PC-9 (cell line): ENCODE measurements at regions of chr10 and their contacts with region 1.

Region 1: DNA sequence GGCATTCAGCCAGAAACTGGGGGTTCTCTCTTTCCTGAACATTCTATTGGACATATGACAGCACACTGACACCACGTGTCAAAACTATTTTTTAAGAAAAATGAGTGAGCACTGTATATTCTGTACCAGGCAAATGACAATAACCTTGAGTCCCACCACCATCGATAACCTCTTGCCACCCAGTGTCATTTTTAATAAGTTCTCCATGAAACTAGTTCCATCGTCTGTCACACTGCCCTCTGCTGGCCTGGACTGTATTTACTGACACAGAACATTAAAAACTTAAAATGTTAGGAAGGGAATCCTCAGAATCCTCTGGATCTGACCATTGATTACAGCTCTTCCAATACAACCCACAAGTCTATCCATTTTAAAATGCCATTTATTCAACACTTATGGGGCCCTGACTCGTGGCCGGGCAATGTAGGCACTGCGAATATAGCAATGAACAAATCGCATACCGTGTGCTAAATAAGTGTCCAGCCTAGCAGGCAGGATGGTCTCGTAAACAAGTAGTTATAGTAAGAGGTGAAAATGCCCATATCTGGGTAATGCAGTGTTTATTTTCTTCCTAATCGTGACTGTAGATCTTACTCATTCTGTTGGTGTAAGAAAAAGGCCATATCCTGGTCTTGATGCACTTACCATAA is 35.9 kb upstream of the CACNB2 start:
- DNase-seq: peak; percentile 28 to 33
- H3K4me3 ChIP-seq: no peak overlapping the region
- H3K27ac ChIP-seq: no peak overlapping the region
- H3K4me1 ChIP-seq: no peaks in the 10 kb centered on the region
- H3K27me3 ChIP-seq: no peaks in the 10 kb centered on the region
- CTCF ChIP-seq: peak; percentile 71

Region 2: DNA sequence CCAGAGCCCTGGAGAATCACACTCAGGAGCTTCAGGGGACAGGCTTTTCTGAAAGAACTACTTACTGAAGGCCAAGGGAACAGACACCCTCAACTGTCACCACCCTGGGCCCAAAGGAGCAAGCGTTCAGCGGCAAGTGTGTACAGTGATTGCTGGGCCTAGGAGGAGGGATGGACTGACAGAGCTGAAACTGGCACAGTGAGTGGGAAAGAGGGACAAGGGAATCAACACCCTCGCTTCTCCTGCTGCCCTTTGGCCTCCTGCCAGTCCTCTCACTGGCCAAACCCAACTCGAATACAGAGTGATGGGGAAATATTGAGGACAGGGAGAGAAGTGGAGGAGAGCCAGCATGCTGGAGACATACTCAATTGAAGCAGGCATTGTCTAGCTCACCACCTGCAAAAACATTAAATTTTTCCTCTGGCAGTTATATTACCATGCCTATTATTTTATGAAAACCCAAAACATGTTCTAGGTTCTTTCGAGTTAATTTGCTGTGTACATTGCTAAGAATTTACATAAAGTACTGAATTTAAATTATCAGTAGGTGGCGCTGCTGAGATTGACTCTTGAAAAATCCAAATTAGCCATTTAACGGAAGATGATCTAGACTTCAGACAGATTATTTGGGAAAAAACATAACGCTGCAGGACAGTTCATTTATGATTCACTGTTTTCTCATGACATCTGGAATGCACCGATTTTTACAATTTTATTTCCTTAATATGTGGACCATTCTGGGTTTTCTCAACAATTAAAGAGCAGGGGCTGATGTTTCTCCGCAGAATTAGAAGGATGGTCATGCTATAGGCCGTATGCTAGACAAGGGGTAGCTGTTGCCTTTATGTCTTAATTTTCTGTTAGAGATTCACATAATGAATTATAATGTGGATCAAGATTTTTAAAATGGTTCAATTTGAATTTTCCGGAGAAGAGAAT is 367.1 kb before region 1 on chr10:
- CTCF ChIA-PET with region 1: no interaction called
- POLR2A ChIA-PET with region 1: no interaction called
- intact Hi-C with region 1: loop called (anchors 5 kb)
- DNase-seq: no peak
- H3K4me3 ChIP-seq: no peak overlapping the region
- H3K27ac ChIP-seq: no peak overlapping the region
- H3K4me1 ChIP-seq: no peaks in the 10 kb centered on the region
- H3K27me3 ChIP-seq: no peaks in the 10 kb centered on the region
- CTCF ChIP-seq: peak; percentile 65

Region 3: GRCh38 chr10:17847585-17848296 is 256.6 kb before region 1 on chr10:
- CTCF ChIA-PET with region 1: interaction called, 5 read pairs
- POLR2A ChIA-PET with region 1: no interaction called
- intact Hi-C with region 1: loop called (anchors 5 kb)
- DNase-seq: no peak
- H3K4me3 ChIP-seq: no peak overlapping the region
- H3K27ac ChIP-seq: no peak overlapping the region
- H3K4me1 ChIP-seq: no peaks in the 10 kb centered on the region
- H3K27me3 ChIP-seq: no peaks in the 10 kb centered on the region
- CTCF ChIP-seq: peak; percentile 61

Region 4: GRCh38 chr10:17910125-17910789 is 194.1 kb before region 1 on chr10:
- CTCF ChIA-PET with region 1: no interaction called
- POLR2A ChIA-PET with region 1: no interaction called
- intact Hi-C with region 1: loop called (anchors 1 kb)
- DNase-seq: peak in 1 of 2 experiments; percentile 23
- H3K4me3 ChIP-seq: no peak overlapping the region
- H3K27ac ChIP-seq: no peak overlapping the region
- H3K4me1 ChIP-seq: no peaks in the 10 kb centered on the region
- H3K27me3 ChIP-seq: no peaks in the 10 kb centered on the region
- CTCF ChIP-seq: peak; percentile 59

Region 5: DNA sequence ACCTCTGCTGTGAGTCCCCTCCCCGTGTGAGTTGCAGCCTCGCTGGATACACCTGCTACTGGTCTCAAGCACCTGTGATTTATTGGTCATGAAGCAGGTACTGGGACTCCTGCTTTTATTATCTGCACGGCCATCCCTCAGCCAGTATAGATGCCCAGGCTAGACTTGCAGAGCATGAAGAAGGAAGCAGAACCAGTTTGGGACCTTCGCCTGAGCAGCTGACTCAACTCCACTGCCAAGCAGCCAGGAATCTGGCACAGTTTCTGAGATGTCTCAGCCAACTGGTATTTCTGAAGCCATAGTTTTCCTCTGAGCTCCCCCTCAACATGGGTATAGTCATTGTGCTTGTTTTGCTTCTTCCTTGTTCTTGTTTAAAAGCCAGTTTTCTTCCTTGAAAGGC is 180.6 kb before region 1 on chr10:
- CTCF ChIA-PET with region 1: no interaction called
- POLR2A ChIA-PET with region 1: no interaction called
- intact Hi-C with region 1: loop called (anchors 5 kb)
- DNase-seq: peak; percentile 86 to 87
- H3K4me3 ChIP-seq: no peak overlapping the region; the same call in 1 of the 2 replicates
- H3K27ac ChIP-seq: peak overlapping the region; percentile 86
- H3K4me1 ChIP-seq: peaks cover 20% of the 10 kb centered on the region
- H3K27me3 ChIP-seq: no peaks in the 10 kb centered on the region
- CTCF ChIP-seq: no peak

Region 6: DNA sequence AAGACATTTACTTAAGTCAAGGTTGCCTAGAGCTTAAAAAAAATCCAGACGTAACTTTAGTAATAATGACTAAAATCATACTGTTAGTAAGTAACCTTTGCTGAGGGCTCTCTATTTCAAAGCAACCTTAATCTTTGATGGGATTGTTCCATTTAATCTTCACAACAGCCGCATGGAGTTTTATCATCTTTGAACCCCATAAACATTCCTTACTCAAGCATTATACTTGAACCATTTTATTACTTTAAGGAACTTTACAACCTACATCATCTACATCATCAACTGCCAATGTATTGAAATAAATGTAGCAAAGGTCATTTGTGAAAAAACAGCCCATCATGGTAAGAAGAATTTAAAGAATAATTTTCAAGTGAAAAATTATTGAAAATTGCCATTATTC is 12.9 kb after region 1 on chr10:
- CTCF ChIA-PET with region 1: no interaction called
- POLR2A ChIA-PET with region 1: no interaction called
- intact Hi-C with region 1: no loop called
- DNase-seq: no peak
- H3K4me3 ChIP-seq: no peak overlapping the region
- H3K27ac ChIP-seq: no peak overlapping the region
- H3K4me1 ChIP-seq: no peaks in the 10 kb centered on the region
- H3K27me3 ChIP-seq: no peaks in the 10 kb centered on the region
- CTCF ChIP-seq: no peak